ENCODE measurements at regions of chr16 and their contacts with region 1.

Region 1: DNA sequence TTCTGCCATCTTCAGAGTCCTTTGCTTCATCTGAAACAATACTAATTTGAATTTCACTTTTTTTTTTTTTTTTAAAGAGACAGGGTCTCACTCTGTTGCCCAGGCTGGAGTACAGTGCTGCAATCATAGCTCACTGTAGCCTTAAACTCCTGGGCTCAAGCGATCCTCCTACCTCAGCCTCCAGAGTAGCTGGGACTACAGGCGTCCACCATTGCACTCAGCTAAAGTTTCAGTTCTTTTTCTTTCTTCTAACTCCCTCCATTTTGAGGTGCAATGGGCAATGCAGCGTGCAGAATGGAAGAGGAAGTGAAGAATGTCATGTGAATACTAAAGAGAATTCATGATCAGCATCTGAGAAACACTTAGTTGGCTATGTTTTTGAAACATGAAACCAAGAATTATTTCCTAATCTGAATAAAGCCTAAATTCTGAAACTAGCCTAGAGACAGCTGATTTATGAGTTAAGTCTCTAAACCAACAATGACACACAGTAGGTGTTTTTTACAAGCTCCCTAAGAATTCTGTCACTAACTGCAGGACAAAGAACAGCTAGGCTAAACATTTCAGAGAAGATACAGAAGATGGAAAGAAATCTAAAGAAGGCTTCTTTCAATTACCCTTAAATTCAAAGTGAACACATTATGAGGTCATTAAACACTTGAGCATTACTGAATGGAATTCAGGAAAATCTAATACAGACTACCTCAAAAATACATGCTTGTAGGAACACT is 20.9 kb downstream of the SNN start:
- DNase-seq: no peak
- ATAC-seq: peak in 3 of 4 experiments; percentile 15 to 27 (median 24)
- H3K4me3 ChIP-seq: peak overlapping the region in 1 of 2 donors; percentile 21
- H3K4me3 Mint-ChIP-seq: peak overlapping the region in 2 of 3 donors; percentile 24 to 27
- H3K27ac ChIP-seq: no peak overlapping the region
- H3K27ac Mint-ChIP-seq: peak overlapping the region; percentile 82
- H3K4me1 ChIP-seq: peaks cover 3 to 7% of the 10 kb centered on the region in 2 experiments
- H3K4me1 Mint-ChIP-seq: peaks cover 21 to 33% (median 23%) of the 10 kb centered on the region in 3 donors
- H3K27me3 ChIP-seq: no peaks in the 10 kb centered on the region
- H3K27me3 Mint-ChIP-seq: no peaks in the 10 kb centered on the region

Region 2: DNA sequence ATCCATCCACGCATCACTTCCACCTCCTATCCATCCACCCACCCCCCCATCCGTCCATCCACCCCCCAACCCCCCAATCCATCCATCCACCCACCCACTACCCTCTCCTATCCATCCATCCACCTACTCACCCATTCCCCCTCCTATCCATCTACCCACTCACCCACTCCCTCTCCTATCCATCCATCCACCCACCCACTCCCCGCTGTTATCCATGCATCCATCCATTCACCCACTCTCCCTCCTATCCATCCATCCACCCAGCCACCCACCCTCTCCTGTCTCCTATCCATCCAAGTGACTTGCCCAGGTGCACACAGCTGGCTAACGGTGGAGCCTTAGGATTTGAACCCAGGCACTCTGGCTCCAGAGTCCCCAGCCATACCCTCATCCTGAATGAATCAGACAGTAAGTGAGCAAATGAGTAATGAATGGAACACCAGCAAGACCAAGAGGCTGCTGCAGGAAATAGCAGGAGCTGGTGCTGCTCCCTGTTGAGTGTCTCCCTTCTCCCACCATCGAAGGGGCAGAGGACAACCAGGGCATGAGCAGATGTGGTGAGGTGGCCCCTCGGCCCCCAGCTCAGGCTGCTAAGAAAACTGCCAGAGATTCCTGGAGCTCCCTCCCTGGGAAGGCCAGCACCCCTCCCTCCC is 165.0 kb before region 1 on chr16:
- CTCF ChIA-PET with region 1: no interaction called
- POLR2A ChIA-PET with region 1: no interaction called
- DNase-seq: no peak
- ATAC-seq: no peak
- H3K4me3 ChIP-seq: no peak overlapping the region
- H3K4me3 Mint-ChIP-seq: no peak overlapping the region
- H3K27ac ChIP-seq: no peak overlapping the region
- H3K27ac Mint-ChIP-seq: no peak overlapping the region
- H3K4me1 ChIP-seq: no peaks in the 10 kb centered on the region
- H3K4me1 Mint-ChIP-seq: no peaks in the 10 kb centered on the region
- H3K27me3 ChIP-seq: peaks cover 0 to 4% of the 10 kb centered on the region in 2 experiments
- H3K27me3 Mint-ChIP-seq: peaks cover 0 to 7% of the 10 kb centered on the region in 2 donors

Region 3: DNA sequence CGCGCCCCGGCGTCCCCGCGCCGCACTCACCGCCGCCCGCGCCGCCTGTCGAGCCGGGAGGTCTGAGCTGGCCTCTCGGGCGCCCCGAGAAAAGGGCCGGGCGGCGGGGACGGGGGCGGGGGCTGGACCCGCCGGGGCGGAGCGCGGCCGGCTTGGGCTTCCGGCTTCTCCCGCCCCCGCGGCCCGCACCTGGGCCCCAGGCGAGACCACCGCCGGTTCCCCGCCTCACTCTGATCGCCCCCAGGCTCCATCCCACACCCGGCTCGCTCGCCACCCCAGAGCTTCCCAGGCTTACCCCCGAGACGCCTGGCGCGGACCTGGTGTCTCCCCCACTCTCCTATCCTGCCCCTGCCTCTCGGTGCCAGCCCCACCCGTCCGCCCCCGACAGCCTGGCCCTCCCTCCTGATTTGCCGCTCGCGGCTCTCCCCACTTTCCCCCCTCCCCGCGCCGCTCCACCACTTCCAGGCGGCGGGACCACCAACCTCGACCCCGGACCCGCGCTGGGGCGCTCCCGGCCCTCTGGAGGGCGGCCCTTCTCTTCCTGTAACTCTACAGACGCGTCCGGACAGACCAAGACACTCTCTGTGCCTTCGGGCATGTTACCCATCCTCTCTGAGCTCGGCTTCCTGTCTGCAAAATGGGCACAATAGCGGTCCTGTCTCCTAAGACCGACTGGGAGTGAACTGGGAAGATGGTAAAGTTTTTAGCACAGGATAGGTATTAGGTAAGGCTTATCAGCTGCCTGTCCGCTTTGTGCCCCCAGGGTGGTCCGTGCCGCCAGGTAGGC is 102.1 kb before region 1 on chr16 and contains the start of gene LITAF:
- CTCF ChIA-PET with region 1: no interaction called
- POLR2A ChIA-PET with region 1: interaction called, 3 to 11 read pairs
- DNase-seq: peak in 34 of 35 experiments; percentile 30 to 68 (median 52)
- ATAC-seq: peak; percentile 65 to 73 (median 68)
- H3K4me3 ChIP-seq: peak within 1 kb of the TSS; percentile 84 to 89
- H3K4me3 Mint-ChIP-seq: peak within 1 kb of the TSS; percentile 91 to 96 (median 93)
- H3K27ac ChIP-seq: peak within 1 kb of the TSS; percentile 86
- H3K27ac Mint-ChIP-seq: peak within 1 kb of the TSS; percentile 95 to 97
- H3K4me1 ChIP-seq: peaks cover 29 to 38% of the 10 kb centered on the region in 2 experiments
- H3K4me1 Mint-ChIP-seq: peaks cover 37 to 46% (median 45%) of the 10 kb centered on the region in 3 donors
- H3K27me3 ChIP-seq: no peaks in the 10 kb centered on the region
- H3K27me3 Mint-ChIP-seq: no peaks in the 10 kb centered on the region
- total RNA-seq, gene LITAF: 150 to 256 (median 161) TPM

Region 4: GRCh38 chr16:11706180-11706742 is 17.1 kb after region 1 on chr16:
- CTCF ChIA-PET with region 1: interaction called in 1 of 2 experiments, 3 read pairs
- POLR2A ChIA-PET with region 1: interaction called, 3 to 11 read pairs
- DNase-seq: no peak
- ATAC-seq: no peak
- H3K4me3 ChIP-seq: no peak overlapping the region
- H3K4me3 Mint-ChIP-seq: no peak overlapping the region
- H3K27ac ChIP-seq: no peak overlapping the region
- H3K27ac Mint-ChIP-seq: no peak overlapping the region
- H3K4me1 ChIP-seq: no peaks in the 10 kb centered on the region
- H3K4me1 Mint-ChIP-seq: peaks cover 18 to 21% (median 20%) of the 10 kb centered on the region in 3 donors
- H3K27me3 ChIP-seq: no peaks in the 10 kb centered on the region
- H3K27me3 Mint-ChIP-seq: no peaks in the 10 kb centered on the region

Region 5: GRCh38 chr16:11715246-11715947 is 26.2 kb after region 1 on chr16:
- CTCF ChIA-PET with region 1: no interaction called
- POLR2A ChIA-PET with region 1: interaction called, 3 to 14 read pairs
- DNase-seq: no peak
- ATAC-seq: peak in 1 of 4 experiments; percentile 16
- H3K4me3 ChIP-seq: no peak overlapping the region
- H3K4me3 Mint-ChIP-seq: no peak overlapping the region
- H3K27ac ChIP-seq: no peak overlapping the region
- H3K27ac Mint-ChIP-seq: peak overlapping the region in 1 of 2 donors; percentile 32
- H3K4me1 ChIP-seq: peaks cover 0 to 3% of the 10 kb centered on the region in 2 experiments
- H3K4me1 Mint-ChIP-seq: peaks cover 21 to 26% (median 23%) of the 10 kb centered on the region in 3 donors
- H3K27me3 ChIP-seq: no peaks in the 10 kb centered on the region
- H3K27me3 Mint-ChIP-seq: no peaks in the 10 kb centered on the region